A549 (cell line): ENCODE measurements at regions of chr5 and their contacts with region 1.

Region 1: DNA sequence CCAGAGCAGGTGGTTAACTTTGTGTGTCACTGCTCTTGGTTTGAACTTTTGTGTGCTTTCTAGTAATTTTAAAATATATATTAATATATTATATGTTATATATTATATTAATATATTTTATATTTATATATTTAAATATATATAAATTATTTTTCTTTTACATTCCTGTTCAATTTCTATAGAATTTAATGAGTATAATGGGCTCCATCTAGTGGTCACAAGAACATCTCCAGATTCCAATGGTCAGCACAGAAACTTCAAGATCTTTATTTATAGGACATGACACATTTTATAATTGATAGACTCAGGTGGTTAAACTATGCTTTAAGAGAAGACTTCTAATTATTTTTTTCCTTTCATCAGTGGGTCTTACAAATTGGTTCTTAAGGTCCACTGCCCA is 39.1 kb downstream of the COL23A1 start:
- DNase-seq: peak; percentile 16 to 27
- ATAC-seq: no peak
- H3K4me3 ChIP-seq: no peak overlapping the region
- H3K27ac ChIP-seq: no peak overlapping the region
- H3K4me1 ChIP-seq: no peaks in the 10 kb centered on the region
- CTCF ChIP-seq: peak; percentile 35; the same call in 2 of the 3 replicates
- EP300 ChIP-seq: no peak
- POLR2A ChIP-seq: no peak
- RAD21 ChIP-seq: peak in 1 of 2 experiments; percentile 41; a peak in 1 of 5 replicates

Region 2: DNA sequence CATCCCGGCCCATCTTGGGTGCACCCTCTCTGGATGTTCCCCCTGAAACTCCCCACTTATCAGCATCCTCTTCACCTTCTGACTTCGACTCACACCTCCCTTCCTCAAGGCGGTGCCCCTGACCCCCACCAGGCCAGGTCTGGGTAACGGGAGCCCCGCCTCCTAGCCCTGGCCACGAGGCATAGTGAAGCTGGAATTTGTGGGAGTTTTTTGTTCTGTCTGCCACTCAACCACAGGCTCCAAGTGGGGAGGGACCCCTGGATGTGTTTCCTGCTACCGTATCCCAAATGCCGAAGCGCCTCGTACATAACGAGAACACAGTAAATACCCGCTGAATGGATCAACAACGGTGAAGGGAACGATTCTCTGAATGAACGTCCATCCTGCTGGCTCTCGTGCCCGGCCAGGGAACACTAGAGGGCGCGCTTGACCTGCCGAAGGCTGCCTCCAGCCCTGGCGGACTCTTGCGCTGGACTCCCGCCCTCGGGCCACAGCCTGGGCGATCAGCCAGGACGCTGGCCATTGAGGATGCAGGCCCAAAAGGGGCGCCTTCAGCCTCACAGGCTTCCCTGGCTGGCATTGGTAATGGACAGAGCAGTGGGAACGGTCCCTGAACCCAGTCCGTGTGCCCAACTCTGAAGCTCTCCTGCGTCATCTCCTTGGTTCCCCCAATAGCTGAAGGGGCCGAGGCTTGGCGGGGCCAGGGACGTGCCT is 271.2 kb before region 1 on chr5:
- CTCF ChIA-PET with region 1: interaction called, 10 read pairs
- POLR2A ChIA-PET with region 1: no interaction called
- DNase-seq: peak; percentile 54
- ATAC-seq: peak; percentile 68 to 94; a peak in 5 of 6 replicates
- H3K4me3 ChIP-seq: no peak overlapping the region
- H3K27ac ChIP-seq: no peak overlapping the region
- H3K4me1 ChIP-seq: no peaks in the 10 kb centered on the region
- CTCF ChIP-seq: peak; percentile 58
- EP300 ChIP-seq: no peak
- POLR2A ChIP-seq: no peak
- RAD21 ChIP-seq: peak; percentile 81 to 90

Region 3: GRCh38 chr5:178732281-178732680 is 181.2 kb after region 1 on chr5:
- CTCF ChIA-PET with region 1: no interaction called
- POLR2A ChIA-PET with region 1: no interaction called
- DNase-seq: no peak
- ATAC-seq: no peak
- H3K4me3 ChIP-seq: no peak overlapping the region
- H3K27ac ChIP-seq: no peak overlapping the region
- H3K4me1 ChIP-seq: no peaks in the 10 kb centered on the region
- CTCF ChIP-seq: no peak
- EP300 ChIP-seq: no peak
- POLR2A ChIP-seq: no peak
- RAD21 ChIP-seq: no peak